A549 (cell line): ENCODE measurements at regions of chr2 and their contacts with region 1.

Region 1: GRCh38 chr2:127649684-127650040 is 3.7 kb downstream of the GPR17 start:
- DNase-seq: peak; percentile 54 to 85
- ATAC-seq: peak; percentile 81 to 90
- H3K4me3 ChIP-seq: no peak overlapping the region
- H3K27ac ChIP-seq: peak overlapping the region; percentile 39 to 60; a peak in 2 of 6 replicates
- H3K4me1 ChIP-seq: peaks cover 18% of the 10 kb centered on the region
- CTCF ChIP-seq: peak; percentile 86
- EP300 ChIP-seq: no peak
- POLR2A ChIP-seq: no peak
- RAD21 ChIP-seq: peak; percentile 72 to 77

Region 2: DNA sequence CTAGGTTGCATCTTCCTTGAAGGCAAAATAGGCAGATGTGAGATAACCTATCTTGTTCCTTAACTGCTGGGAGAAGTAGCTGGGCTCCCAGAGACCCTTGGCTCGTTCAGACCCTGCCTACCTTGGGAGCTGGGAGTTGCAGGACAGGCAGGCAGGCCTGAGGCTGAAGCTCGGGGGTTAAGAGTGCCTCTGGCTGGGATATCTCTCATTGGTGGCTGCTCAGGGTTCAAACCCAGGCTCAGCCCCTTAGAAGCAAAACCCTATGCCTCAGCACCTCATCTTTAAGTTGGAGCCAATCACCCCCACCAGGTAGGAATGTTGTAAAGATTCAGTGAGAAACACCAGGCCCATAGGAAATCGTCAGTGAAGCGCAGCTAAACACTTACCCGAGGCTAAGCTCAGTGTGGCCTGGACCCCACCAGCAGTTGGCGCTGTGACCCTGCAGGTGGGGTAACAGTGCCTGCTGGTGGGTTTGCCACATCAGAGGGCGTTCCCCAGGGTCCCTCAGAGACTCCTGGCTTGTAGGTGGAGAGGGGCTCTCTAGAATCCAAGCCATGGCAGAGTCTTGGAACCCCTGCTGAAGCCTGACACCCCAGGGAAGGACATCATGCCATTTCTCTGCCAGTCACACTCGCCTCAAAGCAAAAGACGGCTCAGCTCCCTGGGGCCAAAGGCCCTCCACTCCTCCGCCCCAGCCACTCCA is 58.3 kb before region 1 on chr2:
- CTCF ChIA-PET with region 1: interaction called, 37 read pairs
- POLR2A ChIA-PET with region 1: no interaction called
- DNase-seq: peak; percentile 72 to 74
- ATAC-seq: peak; percentile 90 to 99
- H3K4me3 ChIP-seq: no peak overlapping the region
- H3K27ac ChIP-seq: peak overlapping the region in 1 of 2 experiments; percentile 61; a peak in 2 of 6 replicates
- H3K4me1 ChIP-seq: no peaks in the 10 kb centered on the region
- CTCF ChIP-seq: peak; percentile 91
- EP300 ChIP-seq: no peak
- POLR2A ChIP-seq: no peak
- RAD21 ChIP-seq: peak; percentile 86 to 96

Region 3: GRCh38 chr2:127609031-127609751 is 40.5 kb before region 1 on chr2:
- CTCF ChIA-PET with region 1: interaction called, 11 read pairs
- POLR2A ChIA-PET with region 1: no interaction called
- DNase-seq: no peak
- ATAC-seq: peak in 1 of 2 experiments; percentile 45; a peak in 3 of 6 replicates
- H3K4me3 ChIP-seq: no peak overlapping the region
- H3K27ac ChIP-seq: no peak overlapping the region
- H3K4me1 ChIP-seq: no peaks in the 10 kb centered on the region
- CTCF ChIP-seq: no peak
- EP300 ChIP-seq: no peak
- POLR2A ChIP-seq: no peak
- RAD21 ChIP-seq: no peak

Region 4: GRCh38 chr2:127630417-127631183 is 19.1 kb before region 1 on chr2:
- CTCF ChIA-PET with region 1: interaction called, 11 read pairs
- POLR2A ChIA-PET with region 1: no interaction called
- DNase-seq: no peak
- ATAC-seq: no peak
- H3K4me3 ChIP-seq: no peak overlapping the region
- H3K27ac ChIP-seq: no peak overlapping the region
- H3K4me1 ChIP-seq: no peaks in the 10 kb centered on the region
- CTCF ChIP-seq: no peak
- EP300 ChIP-seq: no peak
- POLR2A ChIP-seq: no peak
- RAD21 ChIP-seq: no peak

Region 5: GRCh38 chr2:127664065-127664894 is 14.6 kb after region 1 on chr2:
- CTCF ChIA-PET with region 1: interaction called, 25 read pairs
- POLR2A ChIA-PET with region 1: no interaction called
- DNase-seq: no peak
- ATAC-seq: no peak
- H3K4me3 ChIP-seq: no peak overlapping the region
- H3K27ac ChIP-seq: no peak overlapping the region
- H3K4me1 ChIP-seq: no peaks in the 10 kb centered on the region
- CTCF ChIP-seq: no peak
- EP300 ChIP-seq: no peak
- POLR2A ChIP-seq: no peak
- RAD21 ChIP-seq: no peak